Prostate gland (tissue), 2 donors: ENCODE measurements at regions of chr5 and their contacts with region 1.

Region 1: GRCh38 chr5:39080597-39081204 is 6.5 kb upstream of the RICTOR start:
- DNase-seq: peak; percentile 15
- H3K4me3 ChIP-seq: no peak overlapping the region
- H3K27ac ChIP-seq: no peak overlapping the region
- H3K4me1 ChIP-seq: no peaks in the 10 kb centered on the region
- H3K27me3 ChIP-seq: no peaks in the 10 kb centered on the region
- CTCF ChIP-seq: peak; percentile 66 to 79 (median 72)
- POLR2A ChIP-seq: no peak

Region 2: GRCh38 chr5:38994324-38994927 is 86.3 kb before region 1 on chr5:
- intact Hi-C with region 1: loop called (anchors 1 kb)
- DNase-seq: peak; percentile 23
- H3K4me3 ChIP-seq: no peak overlapping the region
- H3K27ac ChIP-seq: no peak overlapping the region
- H3K4me1 ChIP-seq: no peaks in the 10 kb centered on the region
- H3K27me3 ChIP-seq: no peaks in the 10 kb centered on the region
- CTCF ChIP-seq: peak in 3 of 4 experiments; percentile 27 to 49 (median 37)
- POLR2A ChIP-seq: no peak